AG04449 (cell line): ENCODE measurements at regions of chr1 and their contacts with region 1.

Region 1: GRCh38 chr1:227437495-227438008 is 119.3 kb upstream of the CDC42BPA start:
- DNase-seq: no peak
- H3K4me3 ChIP-seq: peak overlapping the region; percentile 50
- CTCF ChIP-seq: peak; percentile 19

Region 2: GRCh38 chr1:226912587-226913176 is 524.9 kb before region 1 on chr1:
- CTCF ChIA-PET with region 1: interaction called, 28 read pairs
- POLR2A ChIA-PET with region 1: no interaction called
- DNase-seq: no peak
- H3K4me3 ChIP-seq: no peak overlapping the region
- CTCF ChIP-seq: peak; percentile 41

Region 3: DNA sequence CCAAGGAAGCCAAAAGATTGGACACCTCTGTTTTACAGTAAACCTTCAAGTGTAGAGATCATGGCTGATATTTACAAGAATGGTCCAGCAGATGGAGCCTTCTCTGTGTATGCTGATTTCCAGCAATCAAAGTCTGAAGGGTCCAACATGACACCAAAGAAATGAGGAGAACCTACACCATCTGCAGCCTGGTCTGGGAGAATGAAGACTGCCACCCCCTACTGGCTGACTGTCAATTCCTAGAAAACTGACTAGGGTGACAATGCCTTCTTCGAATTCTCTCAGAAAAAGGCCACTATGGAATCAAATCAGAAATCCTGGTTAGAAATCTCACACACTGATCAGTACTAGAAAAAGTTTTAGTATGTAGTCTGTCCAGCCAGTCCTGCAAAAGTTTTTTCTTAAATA is 202.6 kb before region 1 on chr1:
- CTCF ChIA-PET with region 1: interaction called, 25 read pairs
- POLR2A ChIA-PET with region 1: no interaction called
- DNase-seq: peak; percentile 5
- H3K4me3 ChIP-seq: no peak overlapping the region
- CTCF ChIP-seq: peak; percentile 30

Region 4: DNA sequence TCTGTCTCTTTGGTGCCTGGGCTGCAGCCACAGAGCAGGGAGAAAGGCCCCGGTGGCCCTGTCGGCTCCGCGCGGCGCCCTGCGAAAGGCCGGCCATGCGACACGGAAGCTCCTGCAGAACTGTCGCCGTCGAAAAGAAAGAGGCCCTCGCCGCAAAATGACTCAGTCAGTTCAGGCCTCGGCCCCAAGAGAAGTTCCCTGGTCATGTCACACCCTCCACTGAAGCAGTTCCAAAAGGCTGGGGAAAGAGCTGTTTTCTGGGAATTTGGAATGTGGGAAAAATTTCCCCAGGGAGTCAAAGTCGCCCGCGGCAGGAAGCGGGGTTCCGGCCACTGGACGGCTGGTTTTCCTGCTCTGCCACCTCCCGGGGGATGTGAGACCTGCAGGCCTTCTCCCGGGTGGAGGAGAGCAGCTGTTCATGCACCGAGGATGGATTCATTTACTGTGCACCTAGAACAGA is 10.0 kb after region 1 on chr1:
- CTCF ChIA-PET with region 1: interaction called, 12 read pairs
- POLR2A ChIA-PET with region 1: no interaction called
- DNase-seq: no peak
- H3K4me3 ChIP-seq: no peak overlapping the region
- CTCF ChIP-seq: peak; percentile 49